ENCODE measurements at regions of chr12 and their contacts with region 1.

Region 1: GRCh38 chr12:42498549-42499247 is 90.8 kb downstream of the PRICKLE1 start:
- DNase-seq: no peak
- ATAC-seq: no peak
- H3K4me3 ChIP-seq: no peak overlapping the region
- H3K27ac ChIP-seq: no peak overlapping the region
- H3K4me1 ChIP-seq: peaks cover 0 to 2% of the 10 kb centered on the region in 2 donors
- H3K27me3 ChIP-seq: no peaks in the 10 kb centered on the region

Region 2: GRCh38 chr12:42442308-42442759 is 56.4 kb before region 1 on chr12:
- intact Hi-C with region 1: no loop called
- DNase-seq: peak in 1 of 2 donors; percentile 69
- ATAC-seq: no peak
- H3K4me3 ChIP-seq: no peak overlapping the region
- H3K27ac ChIP-seq: no peak overlapping the region
- H3K4me1 ChIP-seq: peaks cover 2 to 4% of the 10 kb centered on the region in 2 donors
- H3K27me3 ChIP-seq: no peaks in the 10 kb centered on the region

Region 3: DNA sequence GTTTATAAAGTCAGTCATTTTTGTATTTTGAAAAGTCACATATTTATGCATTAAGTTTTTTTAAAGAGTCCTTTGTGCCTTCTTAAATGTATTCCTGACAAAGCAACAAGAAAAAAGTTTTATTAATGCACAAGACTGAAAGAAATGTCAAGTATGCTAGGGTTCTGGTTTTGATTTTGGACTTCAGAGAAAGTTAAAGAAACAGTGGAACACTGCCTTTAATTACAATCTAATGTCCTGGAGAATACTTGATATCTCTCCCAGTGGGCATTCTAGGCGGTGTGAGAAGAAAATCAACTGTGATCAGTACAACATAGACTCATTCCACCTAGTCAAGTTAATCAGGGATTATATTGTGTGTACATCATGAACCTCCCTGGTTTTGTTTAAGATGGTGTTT is 41.0 kb after region 1 on chr12:
- intact Hi-C with region 1: no loop called
- DNase-seq: no peak
- ATAC-seq: no peak
- H3K4me3 ChIP-seq: no peak overlapping the region
- H3K27ac ChIP-seq: no peak overlapping the region
- H3K4me1 ChIP-seq: no peaks in the 10 kb centered on the region
- H3K27me3 ChIP-seq: no peaks in the 10 kb centered on the region

Region 4: DNA sequence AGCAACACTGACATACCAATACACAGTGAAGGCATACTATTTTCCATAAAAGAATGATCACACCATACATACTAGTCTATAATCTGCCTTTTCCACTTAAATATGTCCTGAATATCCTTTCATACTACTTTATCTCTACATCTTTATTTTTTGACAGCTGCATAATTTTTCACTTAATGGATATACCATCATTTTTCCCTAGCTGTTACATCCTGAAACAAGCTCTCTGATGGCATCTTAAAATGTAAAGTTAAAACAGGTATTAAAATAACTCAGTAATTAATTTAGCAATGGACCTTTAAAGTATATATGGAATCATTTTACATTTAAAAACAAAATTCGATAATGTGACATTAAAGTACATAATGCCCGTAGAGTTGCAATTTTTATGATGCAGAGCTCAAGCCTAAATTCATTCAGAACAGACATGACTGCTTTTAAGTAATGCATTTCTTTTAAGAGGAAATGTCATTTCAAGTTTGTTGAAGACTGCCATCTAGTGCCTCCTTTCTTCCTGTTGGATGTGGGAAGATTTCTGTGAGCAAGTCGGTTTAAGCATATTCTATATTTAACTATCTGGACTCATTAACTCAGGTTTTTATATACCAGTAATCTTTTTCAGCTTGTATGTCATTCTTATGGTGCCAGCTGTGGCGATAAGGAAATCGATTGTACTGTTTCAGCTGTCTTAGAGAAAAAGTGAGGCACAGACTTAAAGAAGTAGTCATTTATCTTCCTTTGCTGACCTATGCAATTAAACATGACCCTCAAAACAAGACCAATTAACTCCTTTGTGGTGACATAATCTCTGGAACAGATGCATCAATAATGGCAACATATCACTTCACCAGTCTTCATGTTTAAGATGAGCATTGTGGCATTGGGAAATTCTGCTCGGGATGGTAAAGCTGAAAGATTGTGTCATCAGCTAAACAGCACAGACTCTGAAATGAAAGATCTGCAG is 70.5 kb after region 1 on chr12:
- intact Hi-C with region 1: loop called in 1 of 2 experiments (anchors 5 kb)
- DNase-seq: no peak
- ATAC-seq: peak; percentile 57
- H3K4me3 ChIP-seq: no peak overlapping the region
- H3K27ac ChIP-seq: no peak overlapping the region
- H3K4me1 ChIP-seq: peaks cover 0 to 2% of the 10 kb centered on the region in 2 donors
- H3K27me3 ChIP-seq: no peaks in the 10 kb centered on the region

Measured in aorta (tissue), 5 donors.